T-cell (primary cell): ENCODE measurements at regions of chr6 and their contacts with region 1.

Region 1: GRCh38 chr6:135088818-135089809 is 34.5 kb upstream of the HBS1L start:
- DNase-seq: peak in 3 of 35 experiments; percentile 3 to 57 (median 14)
- ATAC-seq: peak; percentile 42 to 64 (median 61)
- H3K4me3 ChIP-seq: peak overlapping the region in 1 of 2 donors; percentile 43
- H3K4me3 Mint-ChIP-seq: peak overlapping the region; percentile 63 to 76 (median 72)
- H3K27ac ChIP-seq: peak overlapping the region; percentile 35
- H3K27ac Mint-ChIP-seq: peak overlapping the region; percentile 92 to 93
- H3K4me1 ChIP-seq: peaks cover 27 to 45% of the 10 kb centered on the region in 2 experiments
- H3K4me1 Mint-ChIP-seq: peaks cover 81 to 84% (median 82%) of the 10 kb centered on the region in 3 donors
- H3K27me3 ChIP-seq: no peaks in the 10 kb centered on the region
- H3K27me3 Mint-ChIP-seq: no peaks in the 10 kb centered on the region

Region 2: DNA sequence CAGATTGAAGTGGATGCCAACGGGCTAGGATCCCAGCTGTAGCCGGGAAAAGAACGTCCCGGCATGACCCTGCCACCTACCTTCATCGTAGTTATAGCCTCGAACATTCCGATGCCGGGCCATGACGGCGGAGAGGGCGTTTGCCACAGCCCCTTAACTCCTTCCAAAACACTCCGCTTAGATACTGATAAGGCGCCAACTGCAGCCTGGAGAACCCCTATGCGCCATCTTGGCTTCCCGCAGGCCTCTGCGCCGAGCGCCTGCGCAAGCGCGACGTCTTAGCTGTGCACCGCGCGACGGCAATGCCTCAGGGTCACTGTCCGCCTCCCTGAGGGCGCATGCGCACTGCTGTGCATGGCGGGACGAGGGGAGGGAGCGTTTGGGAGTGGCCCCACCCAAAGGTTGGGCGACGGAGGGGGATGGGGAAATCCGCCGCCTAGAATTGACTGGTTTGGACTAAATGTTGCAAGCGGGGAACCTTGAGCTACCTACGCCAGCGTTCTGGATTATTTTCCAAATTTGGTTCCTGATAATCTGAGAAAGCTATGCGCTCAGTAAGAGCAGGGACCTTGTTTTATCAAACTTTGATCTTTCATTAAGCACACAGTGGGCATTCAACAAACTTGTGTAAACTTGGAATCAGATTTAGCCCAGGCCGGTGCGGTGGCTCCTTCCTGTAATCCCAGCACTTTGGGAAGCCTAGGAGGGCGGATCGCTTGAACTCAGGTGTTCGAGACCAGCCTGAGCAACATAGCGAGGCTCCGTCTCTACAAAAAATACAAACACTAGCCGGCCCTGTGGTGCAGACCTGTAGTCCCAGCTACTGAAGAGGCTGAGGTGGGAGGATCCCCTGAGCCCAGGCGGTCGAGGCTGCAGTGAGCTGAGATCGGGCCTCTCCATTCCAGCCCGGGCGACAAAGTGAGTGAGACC is 34.3 kb before region 1 on chr6 and contains the start of gene HBS1L:
- CTCF ChIA-PET with region 1: interaction called, 3 to 26 read pairs
- POLR2A ChIA-PET with region 1: interaction called, 8 to 16 read pairs
- DNase-seq: peak; percentile 92 to 99 (median 95)
- ATAC-seq: peak; percentile 97 to 99 (median 98)
- H3K4me3 ChIP-seq: peak within 1 kb of the TSS; percentile 87 to 100
- H3K4me3 Mint-ChIP-seq: peak within 1 kb of the TSS; percentile 92 to 100 (median 99)
- H3K27ac ChIP-seq: peak within 1 kb of the TSS; percentile 95
- H3K27ac Mint-ChIP-seq: peak within 1 kb of the TSS; percentile 89 to 98
- H3K4me1 ChIP-seq: peaks cover 19 to 23% of the 10 kb centered on the region in 2 experiments
- H3K4me1 Mint-ChIP-seq: peaks cover 40 to 45% (median 43%) of the 10 kb centered on the region in 3 donors
- H3K27me3 ChIP-seq: no peaks in the 10 kb centered on the region
- H3K27me3 Mint-ChIP-seq: no peaks in the 10 kb centered on the region
- total RNA-seq, gene HBS1L: 51.4 to 112 (median 69.7) TPM

Region 3: GRCh38 chr6:135075018-135075417 is 14.1 kb before region 1 on chr6:
- CTCF ChIA-PET with region 1: interaction called, 4 to 10 read pairs
- POLR2A ChIA-PET with region 1: interaction called in 1 of 2 experiments, 3 read pairs
- DNase-seq: no peak
- ATAC-seq: no peak
- H3K4me3 ChIP-seq: no peak overlapping the region
- H3K4me3 Mint-ChIP-seq: no peak overlapping the region
- H3K27ac ChIP-seq: no peak overlapping the region
- H3K27ac Mint-ChIP-seq: no peak overlapping the region
- H3K4me1 ChIP-seq: peaks cover 0 to 5% of the 10 kb centered on the region in 2 experiments
- H3K4me1 Mint-ChIP-seq: peaks cover 11 to 23% (median 15%) of the 10 kb centered on the region in 3 donors
- H3K27me3 ChIP-seq: no peaks in the 10 kb centered on the region
- H3K27me3 Mint-ChIP-seq: no peaks in the 10 kb centered on the region

Region 4: DNA sequence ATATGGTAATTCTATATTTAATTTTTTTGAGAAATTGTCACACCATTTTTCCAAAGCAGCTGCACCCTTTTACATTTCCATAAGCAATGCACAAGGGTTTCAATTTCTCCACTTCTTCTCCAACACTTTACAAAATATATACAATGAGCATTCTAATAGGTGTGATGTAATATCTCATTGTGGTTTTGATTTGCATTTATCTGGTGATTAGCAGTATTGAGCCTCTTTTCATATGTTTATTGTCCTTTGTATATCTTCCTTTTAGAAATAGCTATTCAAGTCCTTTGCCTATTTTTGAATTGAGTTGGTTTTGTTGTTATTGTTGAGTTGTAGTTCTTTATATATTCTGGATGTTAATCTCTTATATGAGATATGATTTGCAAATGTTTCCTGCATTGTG is 13.1 kb after region 1 on chr6:
- CTCF ChIA-PET with region 1: interaction called, 3 to 13 read pairs
- POLR2A ChIA-PET with region 1: interaction called, 4 to 5 read pairs
- DNase-seq: no peak
- ATAC-seq: no peak
- H3K4me3 ChIP-seq: no peak overlapping the region
- H3K4me3 Mint-ChIP-seq: peak overlapping the region in 2 of 3 donors; percentile 53 to 71
- H3K27ac ChIP-seq: peak overlapping the region; percentile 72
- H3K27ac Mint-ChIP-seq: peak overlapping the region; percentile 84 to 94
- H3K4me1 ChIP-seq: peaks cover 23 to 34% of the 10 kb centered on the region in 2 experiments
- H3K4me1 Mint-ChIP-seq: peaks cover 60 to 66% (median 60%) of the 10 kb centered on the region in 3 donors
- H3K27me3 ChIP-seq: no peaks in the 10 kb centered on the region
- H3K27me3 Mint-ChIP-seq: no peaks in the 10 kb centered on the region

Region 5: DNA sequence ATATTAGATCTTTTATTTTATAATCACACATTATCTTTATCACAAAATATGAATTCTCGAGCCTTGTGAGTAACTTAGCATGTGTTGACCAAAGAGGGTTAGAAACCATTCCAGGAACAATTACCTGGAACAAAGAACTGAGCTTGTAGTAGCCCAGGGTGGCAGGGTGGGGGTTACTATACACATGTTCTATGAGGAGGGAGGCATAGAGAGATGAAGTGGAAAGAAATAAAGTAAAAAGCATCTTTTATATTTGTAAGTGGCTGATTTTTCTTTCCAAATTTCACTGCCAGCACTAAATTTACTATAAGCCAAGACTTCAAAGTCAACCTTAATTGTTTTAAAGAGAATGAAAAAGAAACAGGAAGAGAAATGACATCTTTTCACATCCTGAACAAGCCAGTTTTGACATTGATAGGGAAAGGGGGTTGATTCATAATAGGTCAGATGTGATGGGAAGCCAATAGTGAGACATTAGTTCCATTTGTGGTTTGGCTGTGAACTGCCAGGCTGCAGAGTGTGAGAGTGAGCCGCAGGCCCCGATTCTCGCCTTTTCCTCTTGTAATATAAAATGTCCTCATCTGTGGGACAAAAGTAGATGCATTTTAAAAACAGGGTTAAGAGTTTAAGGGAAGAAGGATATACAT is 39.3 kb after region 1 on chr6:
- CTCF ChIA-PET with region 1: interaction called, 5 to 6 read pairs
- POLR2A ChIA-PET with region 1: interaction called, 4 to 14 read pairs
- DNase-seq: peak in 32 of 35 experiments; percentile 6 to 76 (median 28)
- ATAC-seq: peak; percentile 67 to 98 (median 81)
- H3K4me3 ChIP-seq: no peak overlapping the region
- H3K4me3 Mint-ChIP-seq: peak overlapping the region; percentile 62 to 85 (median 65)
- H3K27ac ChIP-seq: peak overlapping the region; percentile 77
- H3K27ac Mint-ChIP-seq: peak overlapping the region; percentile 97
- H3K4me1 ChIP-seq: peaks cover 8 to 23% of the 10 kb centered on the region in 2 experiments
- H3K4me1 Mint-ChIP-seq: peaks cover 35 to 37% (median 36%) of the 10 kb centered on the region in 3 donors
- H3K27me3 ChIP-seq: no peaks in the 10 kb centered on the region
- H3K27me3 Mint-ChIP-seq: no peaks in the 10 kb centered on the region

Region 6: DNA sequence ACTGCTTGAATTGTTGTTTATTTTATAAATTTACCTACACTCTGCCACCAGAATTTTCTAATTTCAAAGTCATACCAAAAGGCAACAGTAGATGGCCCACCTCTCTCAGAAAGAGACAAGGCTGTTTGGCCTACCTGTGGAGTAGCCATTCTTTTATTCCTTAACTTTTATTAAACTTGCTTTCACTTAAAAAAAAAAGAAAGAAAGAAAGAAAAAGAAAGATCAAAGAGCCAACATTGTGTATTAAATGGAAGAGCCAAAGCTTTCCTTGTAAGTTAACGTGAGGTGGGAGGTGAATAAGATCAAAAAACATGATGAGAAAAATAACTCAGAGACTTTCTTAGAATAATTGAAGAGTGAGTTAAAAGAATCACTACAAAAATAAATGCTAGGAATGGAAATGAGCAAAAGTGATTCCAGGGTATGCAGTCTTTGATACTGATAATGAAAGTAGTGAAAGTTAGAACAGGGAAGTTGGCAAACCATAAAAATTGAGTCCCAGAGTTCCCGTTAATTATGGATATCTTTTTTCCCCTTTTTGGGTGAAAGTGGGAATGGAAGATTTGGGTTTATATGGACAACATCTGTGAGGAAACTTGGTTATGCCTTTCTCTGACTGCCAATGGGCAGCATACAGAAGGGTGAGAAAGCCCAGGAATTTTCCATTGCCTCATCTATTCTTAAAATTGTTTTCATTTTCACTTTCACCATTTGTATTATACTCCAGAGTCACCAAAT is 56.1 kb after region 1 on chr6:
- CTCF ChIA-PET with region 1: interaction called, 3 to 10 read pairs
- POLR2A ChIA-PET with region 1: interaction called in 1 of 2 experiments, 9 read pairs
- DNase-seq: peak in 6 of 35 experiments; percentile 4 to 66 (median 10)
- ATAC-seq: peak; percentile 42 to 65 (median 52)
- H3K4me3 ChIP-seq: no peak overlapping the region
- H3K4me3 Mint-ChIP-seq: peak overlapping the region; percentile 38 to 42 (median 38)
- H3K27ac ChIP-seq: peak overlapping the region; percentile 18
- H3K27ac Mint-ChIP-seq: peak overlapping the region; percentile 82 to 87
- H3K4me1 ChIP-seq: peaks cover 0 to 7% of the 10 kb centered on the region in 2 experiments
- H3K4me1 Mint-ChIP-seq: peaks cover 41 to 52% (median 42%) of the 10 kb centered on the region in 3 donors
- H3K27me3 ChIP-seq: no peaks in the 10 kb centered on the region
- H3K27me3 Mint-ChIP-seq: no peaks in the 10 kb centered on the region

Region 7: DNA sequence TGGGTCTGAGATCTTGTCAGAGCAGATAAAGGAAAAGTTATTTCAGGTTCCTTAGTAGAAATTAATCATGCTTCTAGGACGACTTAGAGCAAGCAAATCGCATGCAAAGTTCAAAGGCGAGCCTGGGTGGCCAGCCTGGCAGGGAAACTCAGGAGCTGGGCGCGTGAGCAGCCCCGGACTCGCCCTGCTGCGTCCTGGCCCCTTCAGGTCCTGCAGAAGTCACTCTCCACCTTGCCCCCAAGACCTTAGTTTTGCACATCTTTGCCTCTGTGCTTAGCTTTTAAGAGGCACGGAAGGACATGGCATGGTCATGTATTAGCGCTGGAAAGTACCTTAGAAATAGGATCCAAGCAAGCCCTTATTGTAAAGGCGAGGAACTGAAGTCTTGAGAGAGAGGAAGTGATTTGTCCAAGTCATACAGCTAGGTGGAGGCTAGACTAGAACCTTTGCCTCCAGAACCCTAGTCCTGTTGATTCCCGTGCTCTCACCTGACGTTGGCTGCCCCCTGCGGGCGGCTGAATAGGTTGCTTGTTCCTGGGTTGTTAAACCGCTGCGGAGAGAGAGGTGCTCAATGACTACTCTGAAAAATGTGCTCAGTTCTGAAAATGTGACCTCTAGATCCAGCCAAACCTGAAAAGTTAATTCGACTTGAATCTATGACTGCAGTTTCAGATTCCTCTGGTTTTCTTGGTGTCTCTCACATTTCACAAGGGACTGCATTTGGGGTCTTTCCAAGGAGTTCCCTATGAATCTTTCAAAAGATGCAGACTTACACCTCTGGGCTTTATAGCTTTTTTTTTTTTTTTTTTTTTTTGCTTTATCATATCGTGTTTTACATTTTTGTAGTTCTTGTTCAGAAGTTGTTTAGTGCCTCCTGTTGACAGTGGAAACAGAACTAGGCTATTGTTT is 94.7 kb after region 1 on chr6:
- CTCF ChIA-PET with region 1: interaction called, 3 to 12 read pairs
- POLR2A ChIA-PET with region 1: no interaction called
- DNase-seq: peak; percentile 59 to 84 (median 71)
- ATAC-seq: peak; percentile 45 to 55 (median 48)
- H3K4me3 ChIP-seq: peak overlapping the region; percentile 63 to 98
- H3K4me3 Mint-ChIP-seq: peak overlapping the region; percentile 83 to 94 (median 87)
- H3K27ac ChIP-seq: peak overlapping the region; percentile 5
- H3K27ac Mint-ChIP-seq: peak overlapping the region; percentile 74 to 81
- H3K4me1 ChIP-seq: peaks cover 12 to 21% of the 10 kb centered on the region in 2 experiments
- H3K4me1 Mint-ChIP-seq: peaks cover 17 to 29% (median 25%) of the 10 kb centered on the region in 3 donors
- H3K27me3 ChIP-seq: no peaks in the 10 kb centered on the region
- H3K27me3 Mint-ChIP-seq: no peaks in the 10 kb centered on the region